Activated CD4-positive, alpha-beta T cell treated with anti-CD3 and anti-CD28 coated beads for 36 hours (primary cell): ENCODE measurements at regions of chrX and their contacts with region 1.

Region 1: GRCh38 chrX:71671043-71671780 is 3.9 kb downstream of the LOC101059915 start:
- DNase-seq: peak; percentile 78
- ATAC-seq: peak; percentile 79
- H3K4me3 Mint-ChIP-seq: no peak overlapping the region
- H3K27ac Mint-ChIP-seq: peak overlapping the region; percentile 15
- H3K4me1 Mint-ChIP-seq: peaks cover 23% of the 10 kb centered on the region
- H3K27me3 Mint-ChIP-seq: peaks cover 4% of the 10 kb centered on the region

Region 2: DNA sequence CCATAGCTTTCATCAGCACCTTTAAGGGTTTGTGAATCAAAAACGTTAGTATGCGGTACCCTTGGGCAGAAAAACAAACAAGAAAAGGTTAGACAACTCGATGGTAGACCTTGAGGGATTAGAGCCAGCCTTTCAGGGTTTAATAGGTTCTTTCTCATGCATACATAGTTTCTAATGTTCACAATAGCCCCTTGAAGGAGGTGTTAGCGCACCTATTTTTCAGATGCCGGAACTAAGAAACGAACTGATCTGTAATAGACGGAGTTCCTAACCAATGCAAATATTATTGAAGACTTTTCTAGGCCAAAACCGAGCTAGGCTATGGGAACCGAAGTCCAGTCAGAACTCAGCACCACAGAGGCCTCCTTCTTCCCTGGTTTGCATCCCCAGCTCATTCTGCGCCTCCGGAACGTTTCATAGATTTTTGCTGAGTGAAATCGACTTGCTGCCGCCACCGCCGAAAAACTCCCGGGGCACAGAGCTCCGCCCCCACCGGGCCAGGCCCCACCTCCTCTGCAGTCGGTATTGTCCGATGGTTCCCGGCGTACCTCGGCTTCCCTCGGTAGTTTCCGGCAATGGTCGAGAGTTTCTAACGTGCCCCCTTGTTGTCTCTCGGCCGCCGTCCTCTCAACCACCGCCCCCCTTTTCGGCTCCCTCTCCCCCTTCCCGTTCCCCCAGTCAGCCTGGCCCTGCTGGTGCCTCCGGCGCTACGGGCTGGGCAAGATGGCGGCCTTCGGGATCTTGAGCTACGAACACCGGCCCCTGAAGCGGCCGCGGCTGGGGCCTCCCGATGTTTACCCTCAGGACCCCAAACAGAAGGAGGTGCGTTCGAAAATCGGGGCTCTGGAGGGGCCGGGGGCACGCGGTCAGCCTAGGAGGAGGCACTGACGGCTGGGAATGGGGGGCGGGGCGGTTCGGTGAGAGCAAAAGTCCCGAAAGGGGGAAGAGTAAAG is 552.9 kb before region 1 on chrX and contains the start of gene MED12:
- CTCF ChIA-PET with region 1: no interaction called
- POLR2A ChIA-PET with region 1: no interaction called
- intact Hi-C with region 1: no loop called
- DNase-seq: peak; percentile 91
- ATAC-seq: peak; percentile 98
- H3K4me3 Mint-ChIP-seq: peak within 1 kb of the TSS; percentile 79
- H3K27ac Mint-ChIP-seq: peak within 1 kb of the TSS; percentile 87
- H3K4me1 Mint-ChIP-seq: peaks cover 23% of the 10 kb centered on the region
- H3K27me3 Mint-ChIP-seq: no peaks in the 10 kb centered on the region
- total RNA-seq, gene MED12: 46.2 to 56.4 TPM

Region 3: DNA sequence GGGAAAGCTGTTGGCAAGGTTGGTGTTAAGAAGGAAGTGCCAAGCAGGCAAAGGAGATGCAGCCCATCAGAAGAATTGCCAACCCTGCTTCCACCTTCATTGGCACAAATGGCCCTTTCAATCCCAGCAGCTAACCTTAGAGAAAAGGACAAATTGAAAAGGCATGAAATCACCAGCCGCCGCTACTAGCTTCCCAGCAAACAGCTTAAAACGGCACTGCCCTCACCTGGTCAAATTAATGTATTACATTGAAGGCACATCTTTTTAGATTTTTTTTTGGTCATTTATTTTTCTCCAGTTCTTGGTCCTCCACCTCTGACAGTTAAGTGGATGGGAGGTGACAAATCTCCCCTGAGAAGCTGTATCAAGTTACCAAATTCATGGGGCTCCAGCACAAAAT is 188.4 kb after region 1 on chrX:
- CTCF ChIA-PET with region 1: interaction called, 11 read pairs
- POLR2A ChIA-PET with region 1: no interaction called
- intact Hi-C with region 1: loop called in 1 of 2 experiments (anchors 1 kb)
- DNase-seq: peak; percentile 54
- ATAC-seq: no peak
- H3K4me3 Mint-ChIP-seq: no peak overlapping the region
- H3K27ac Mint-ChIP-seq: no peak overlapping the region
- H3K4me1 Mint-ChIP-seq: no peaks in the 10 kb centered on the region
- H3K27me3 Mint-ChIP-seq: peaks cover 7% of the 10 kb centered on the region